ENCODE measurements at regions of chr7 and their contacts with region 1.

Region 1: GRCh38 chr7:129969807-129970446 is 17.2 kb upstream of the UBE2H start:
- DNase-seq: peak; percentile 97 to 99
- H3K4me3 ChIP-seq: peak overlapping the region; percentile 22; the same call in 1 of the 2 replicates
- H3K27ac ChIP-seq: peak overlapping the region; percentile 99
- H3K4me1 ChIP-seq: peaks cover 47% of the 10 kb centered on the region
- H3K27me3 ChIP-seq: no peaks in the 10 kb centered on the region
- CTCF ChIP-seq: no peak

Region 2: GRCh38 chr7:129845178-129845971 is 124.6 kb before region 1 on chr7:
- CTCF ChIA-PET with region 1: interaction called, 9 read pairs
- POLR2A ChIA-PET with region 1: interaction called, 13 read pairs
- intact Hi-C with region 1: no loop called
- DNase-seq: peak; percentile 55 to 69
- H3K4me3 ChIP-seq: no peak overlapping the region
- H3K27ac ChIP-seq: peak overlapping the region; percentile 88
- H3K4me1 ChIP-seq: peaks cover 46% of the 10 kb centered on the region
- H3K27me3 ChIP-seq: no peaks in the 10 kb centered on the region
- CTCF ChIP-seq: no peak

Region 3: DNA sequence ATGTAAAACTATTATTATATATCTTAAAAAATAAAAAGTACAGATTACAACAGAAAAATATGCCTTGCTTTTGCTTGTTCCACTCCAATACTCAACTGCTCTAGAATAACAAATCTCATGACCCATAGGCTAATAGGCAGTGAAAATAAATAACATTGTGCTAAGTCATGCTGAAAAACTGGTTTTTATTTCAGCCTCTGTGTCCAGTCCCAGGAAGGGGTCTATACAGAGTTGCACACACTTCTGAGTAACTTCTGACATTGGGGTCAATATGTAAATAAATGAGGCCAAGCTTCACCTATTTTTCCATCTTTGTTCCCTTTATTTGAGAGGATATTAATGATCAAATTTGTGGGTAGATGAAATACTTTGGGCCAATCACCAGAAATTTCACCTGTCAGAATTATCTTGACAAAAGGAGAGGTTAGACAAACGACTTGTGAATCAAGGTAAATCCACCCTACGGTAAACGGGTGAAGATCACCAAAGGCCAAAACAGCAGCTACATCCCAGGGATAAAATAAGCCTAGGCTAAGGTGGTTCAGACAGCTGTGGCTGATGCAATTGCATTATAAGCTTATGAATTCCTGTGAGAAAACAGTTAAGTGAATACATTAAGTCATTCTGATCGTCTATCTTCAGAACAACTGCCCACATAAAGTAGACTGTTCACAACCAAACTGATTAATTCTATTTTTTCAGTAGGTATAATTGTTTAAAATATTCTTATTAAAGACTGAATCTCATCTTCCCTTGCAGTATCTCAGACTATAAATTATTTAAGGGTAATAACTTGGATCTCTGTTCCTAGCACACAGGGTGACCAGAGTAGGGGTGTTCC is 104.6 kb before region 1 on chr7:
- CTCF ChIA-PET with region 1: no interaction called
- POLR2A ChIA-PET with region 1: interaction called, 16 read pairs
- intact Hi-C with region 1: no loop called
- DNase-seq: peak; percentile 11 to 80
- H3K4me3 ChIP-seq: 0 out of 2 replicates have a peak overlapping the region, but pooled peaks have one; percentile 16
- H3K27ac ChIP-seq: peak overlapping the region; percentile 96
- H3K4me1 ChIP-seq: peaks cover 58% of the 10 kb centered on the region
- H3K27me3 ChIP-seq: no peaks in the 10 kb centered on the region
- CTCF ChIP-seq: no peak

Region 4: DNA sequence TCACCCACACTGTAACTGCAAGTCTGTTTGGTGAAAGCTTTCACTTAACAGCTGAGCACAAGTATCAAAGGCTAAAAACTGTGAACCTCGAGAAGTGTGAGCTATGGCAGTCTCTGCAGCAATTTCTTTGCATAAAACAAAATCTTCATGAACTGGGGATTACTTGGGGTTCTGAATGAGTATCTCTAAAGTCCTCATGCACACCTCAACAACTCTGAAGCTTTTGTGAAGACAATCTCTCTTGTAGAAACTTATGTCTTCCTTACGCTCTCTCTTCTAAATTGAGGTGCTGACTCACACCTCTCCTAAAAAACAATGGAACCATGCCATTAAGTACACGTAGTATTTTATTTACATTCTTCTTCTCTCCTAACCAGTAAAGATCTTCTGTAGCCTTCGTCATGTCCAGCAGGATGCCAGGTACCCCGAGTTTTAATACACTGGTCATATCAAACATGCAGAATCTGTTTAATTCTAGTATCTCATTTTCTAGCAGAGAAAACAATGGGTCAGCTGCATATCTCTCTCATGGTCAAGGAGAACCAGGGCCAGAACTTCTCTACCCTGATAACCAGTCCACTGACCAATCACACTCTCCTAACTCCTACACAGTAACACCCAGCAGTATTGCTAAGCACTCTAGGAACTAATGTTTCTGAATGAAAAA is 94.0 kb before region 1 on chr7:
- CTCF ChIA-PET with region 1: no interaction called
- POLR2A ChIA-PET with region 1: interaction called, 32 read pairs
- intact Hi-C with region 1: no loop called
- DNase-seq: peak in 1 of 2 experiments; percentile 19
- H3K4me3 ChIP-seq: no peak overlapping the region
- H3K27ac ChIP-seq: peak overlapping the region; percentile 59
- H3K4me1 ChIP-seq: peaks cover 38% of the 10 kb centered on the region
- H3K27me3 ChIP-seq: no peaks in the 10 kb centered on the region
- CTCF ChIP-seq: no peak

Region 5: DNA sequence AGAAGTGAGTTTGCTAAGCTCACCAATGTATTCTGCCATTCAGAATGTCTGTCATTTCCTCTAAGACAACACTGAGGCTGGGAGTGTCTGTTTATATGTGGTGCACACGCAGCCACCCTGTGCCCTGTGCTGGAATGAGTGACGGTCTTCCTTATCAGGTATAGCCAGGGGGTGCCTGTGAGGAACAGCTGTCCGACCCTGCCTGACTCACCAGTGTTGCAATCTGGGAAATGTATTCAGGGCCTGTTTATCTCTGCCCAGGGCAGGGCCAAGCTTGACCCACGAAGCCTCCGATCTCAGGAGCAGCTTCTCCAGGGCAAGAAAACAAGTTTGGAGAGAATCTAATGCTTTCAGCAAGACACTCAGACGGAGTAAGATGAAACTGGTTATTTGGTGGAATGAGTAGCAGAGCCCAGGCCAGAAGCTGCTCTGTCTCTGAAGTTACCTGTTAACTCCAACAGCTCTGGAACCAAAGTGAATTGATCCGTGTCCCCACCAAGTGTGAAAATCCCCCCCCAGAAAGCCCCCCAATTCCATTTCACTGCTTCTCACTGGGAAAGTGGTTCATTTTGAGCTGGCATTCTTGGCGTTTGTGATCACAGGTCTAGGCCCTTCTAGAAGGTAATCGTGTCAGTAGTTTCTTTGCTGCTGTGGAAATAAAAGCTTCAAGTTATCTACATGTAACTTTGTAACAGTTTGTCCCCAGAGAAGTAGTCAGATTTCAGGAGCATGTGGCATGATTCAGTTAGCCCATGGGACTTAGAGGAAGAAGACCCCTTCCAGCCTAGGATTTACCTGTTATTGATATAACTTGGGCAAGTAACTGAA is 11.1 kb before region 1 on chr7:
- CTCF ChIA-PET with region 1: no interaction called
- POLR2A ChIA-PET with region 1: interaction called, 35 read pairs
- intact Hi-C with region 1: loop called (anchors 1 kb)
- DNase-seq: peak; percentile 96 to 99
- H3K4me3 ChIP-seq: peak overlapping the region; percentile 32; the same call in 1 of the 2 replicates
- H3K27ac ChIP-seq: peak overlapping the region; percentile 99
- H3K4me1 ChIP-seq: peaks cover 47% of the 10 kb centered on the region
- H3K27me3 ChIP-seq: no peaks in the 10 kb centered on the region
- CTCF ChIP-seq: no peak

Region 6: DNA sequence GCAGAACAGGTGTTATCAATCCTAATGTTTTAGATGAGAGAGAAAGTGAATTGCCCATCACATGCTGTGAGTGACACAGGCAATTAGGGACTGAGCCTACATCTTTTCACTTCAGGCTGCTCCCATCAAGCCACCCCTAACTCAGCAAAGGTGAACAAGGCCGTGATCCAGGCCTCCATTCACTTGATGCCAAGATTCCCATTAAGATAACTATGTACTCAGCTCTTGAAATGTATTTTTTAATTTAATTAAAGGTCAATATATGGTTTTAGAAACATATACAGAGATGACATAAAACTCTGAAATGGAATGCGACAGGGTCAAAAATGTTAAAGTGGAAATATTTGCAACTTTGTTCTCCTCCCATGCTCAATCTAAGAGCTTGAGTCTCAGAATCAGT is 10.7 kb after region 1 on chr7:
- CTCF ChIA-PET with region 1: interaction called, 12 read pairs
- POLR2A ChIA-PET with region 1: interaction called, 13 read pairs
- intact Hi-C with region 1: no loop called
- DNase-seq: no peak
- H3K4me3 ChIP-seq: no peak overlapping the region
- H3K27ac ChIP-seq: no peak overlapping the region
- H3K4me1 ChIP-seq: peaks cover 19% of the 10 kb centered on the region
- H3K27me3 ChIP-seq: no peaks in the 10 kb centered on the region
- CTCF ChIP-seq: no peak

Region 7: GRCh38 chr7:130021105-130021834 is 51.3 kb after region 1 on chr7:
- CTCF ChIA-PET with region 1: no interaction called
- POLR2A ChIA-PET with region 1: no interaction called
- intact Hi-C with region 1: no loop called
- DNase-seq: no peak
- H3K4me3 ChIP-seq: no peak overlapping the region
- H3K27ac ChIP-seq: no peak overlapping the region
- H3K4me1 ChIP-seq: peaks cover 13% of the 10 kb centered on the region
- H3K27me3 ChIP-seq: no peaks in the 10 kb centered on the region
- CTCF ChIP-seq: no peak